AG04450 (cell line): ENCODE measurements at regions of chr3 and their contacts with region 1.

Region 1: GRCh38 chr3:43870120-43870519 is 179.4 kb downstream of the ABHD5 start:
- DNase-seq: peak; percentile 26
- H3K4me3 ChIP-seq: no peak overlapping the region
- H3K27ac ChIP-seq: peak overlapping the region; percentile 34
- H3K27me3 ChIP-seq: no peaks in the 10 kb centered on the region
- CTCF ChIP-seq: no peak

Region 2: GRCh38 chr3:42600111-42600988 is 1269.8 kb before region 1 on chr3 and contains the start of gene NKTR:
- CTCF ChIA-PET with region 1: no interaction called
- POLR2A ChIA-PET with region 1: interaction called, 12 read pairs
- DNase-seq: peak; percentile 97
- H3K4me3 ChIP-seq: peak within 1 kb of the TSS; percentile 85
- H3K27ac ChIP-seq: peak within 1 kb of the TSS; percentile 90
- H3K27me3 ChIP-seq: no peaks in the 10 kb centered on the region
- CTCF ChIP-seq: no peak
- polyA plus RNA-seq, gene NKTR: 40.2 and 56.2 TPM in 2 replicates

Region 3: GRCh38 chr3:43411429-43411828 is 458.7 kb before region 1 on chr3:
- CTCF ChIA-PET with region 1: no interaction called
- POLR2A ChIA-PET with region 1: no interaction called
- DNase-seq: no peak
- H3K4me3 ChIP-seq: no peak overlapping the region
- H3K27ac ChIP-seq: no peak overlapping the region
- H3K27me3 ChIP-seq: no peaks in the 10 kb centered on the region
- CTCF ChIP-seq: no peak

Region 4: GRCh38 chr3:43838877-43839276 is 31.2 kb before region 1 on chr3:
- CTCF ChIA-PET with region 1: no interaction called
- POLR2A ChIA-PET with region 1: interaction called, 17 read pairs
- DNase-seq: no peak
- H3K4me3 ChIP-seq: no peak overlapping the region
- H3K27ac ChIP-seq: no peak overlapping the region
- H3K27me3 ChIP-seq: peaks cover 12% of the 10 kb centered on the region
- CTCF ChIP-seq: no peak

Region 5: DNA sequence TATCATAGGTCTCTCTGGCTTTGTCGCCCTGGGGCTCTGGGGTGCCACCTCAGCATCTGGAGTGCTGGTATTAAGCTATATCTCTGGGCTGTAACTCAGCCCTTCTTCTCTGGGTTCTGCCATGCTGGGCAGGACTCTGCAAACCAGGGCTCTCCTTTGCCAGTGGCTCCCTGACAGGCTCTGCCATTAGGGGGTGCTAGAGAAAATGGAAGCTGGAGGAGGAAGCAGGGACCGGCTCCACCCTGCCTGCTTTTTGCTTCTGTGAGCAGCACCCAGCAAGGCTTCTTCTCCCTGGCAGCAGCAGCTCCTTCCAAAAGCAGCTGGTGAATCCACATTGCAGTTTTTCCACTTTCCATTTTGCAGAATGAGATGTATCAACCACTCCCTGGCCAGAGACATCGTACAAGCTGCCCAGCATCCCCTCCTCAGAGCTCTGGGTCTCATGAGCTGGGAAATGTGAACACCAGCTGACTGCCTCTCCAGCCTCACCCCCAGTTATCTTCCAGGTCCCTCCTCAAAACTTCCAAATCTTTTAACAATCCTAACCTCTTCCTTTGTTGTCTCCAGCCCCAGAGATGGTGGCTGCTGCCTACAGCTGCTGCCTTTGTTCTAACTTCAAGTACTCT is 14.3 kb before region 1 on chr3:
- CTCF ChIA-PET with region 1: interaction called, 83 read pairs
- POLR2A ChIA-PET with region 1: interaction called, 6 read pairs
- DNase-seq: peak; percentile 24
- H3K4me3 ChIP-seq: no peak overlapping the region
- H3K27ac ChIP-seq: no peak overlapping the region
- H3K27me3 ChIP-seq: no peaks in the 10 kb centered on the region
- CTCF ChIP-seq: peak; percentile 69

Region 6: DNA sequence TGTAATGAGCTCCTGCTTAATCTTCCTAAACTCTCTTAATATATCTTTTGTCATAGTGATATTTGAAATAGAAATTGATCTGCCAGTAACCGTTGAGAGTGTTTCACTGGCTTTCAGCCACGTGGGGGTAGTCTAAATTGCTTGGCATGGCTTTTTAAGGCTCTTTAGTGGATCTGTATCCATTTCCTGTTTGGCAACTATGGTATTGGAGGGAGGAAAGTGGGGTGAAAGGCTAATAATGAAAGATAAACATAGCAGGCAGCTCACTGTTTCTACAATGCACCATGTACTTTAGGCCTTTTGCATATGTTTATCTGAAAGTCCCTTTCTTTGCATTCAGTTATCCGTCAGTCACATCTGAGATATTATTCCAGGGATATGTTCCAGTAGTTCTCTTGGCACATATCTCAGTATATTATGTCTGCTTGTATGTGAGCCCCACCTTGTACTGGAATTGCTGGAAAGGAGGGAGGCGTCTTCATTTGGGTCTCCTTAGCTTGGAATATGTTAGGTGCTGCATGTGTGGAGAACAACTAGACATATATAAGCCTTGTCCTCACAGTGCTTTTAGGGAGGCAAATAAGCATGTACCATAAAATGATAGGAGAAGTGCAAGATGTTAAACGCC is 382.3 kb after region 1 on chr3:
- CTCF ChIA-PET with region 1: no interaction called
- POLR2A ChIA-PET with region 1: no interaction called
- DNase-seq: no peak
- H3K4me3 ChIP-seq: no peak overlapping the region
- H3K27ac ChIP-seq: no peak overlapping the region
- H3K27me3 ChIP-seq: no peaks in the 10 kb centered on the region
- CTCF ChIP-seq: no peak